A549 (cell line): ENCODE measurements at regions of chr9 and their contacts with region 1.

Region 1: GRCh38 chr9:94812343-94812742 is 85.8 kb downstream of the AOPEP start:
- DNase-seq: peak; percentile 33 to 68
- ATAC-seq: peak in 1 of 2 experiments; percentile 78; a peak in 3 of 6 replicates
- H3K4me3 ChIP-seq: no peak overlapping the region
- H3K27ac ChIP-seq: peak overlapping the region; percentile 46 to 77
- H3K4me1 ChIP-seq: peaks cover 52% of the 10 kb centered on the region
- CTCF ChIP-seq: no peak
- EP300 ChIP-seq: no peak
- POLR2A ChIP-seq: no peak
- RAD21 ChIP-seq: no peak

Region 2: DNA sequence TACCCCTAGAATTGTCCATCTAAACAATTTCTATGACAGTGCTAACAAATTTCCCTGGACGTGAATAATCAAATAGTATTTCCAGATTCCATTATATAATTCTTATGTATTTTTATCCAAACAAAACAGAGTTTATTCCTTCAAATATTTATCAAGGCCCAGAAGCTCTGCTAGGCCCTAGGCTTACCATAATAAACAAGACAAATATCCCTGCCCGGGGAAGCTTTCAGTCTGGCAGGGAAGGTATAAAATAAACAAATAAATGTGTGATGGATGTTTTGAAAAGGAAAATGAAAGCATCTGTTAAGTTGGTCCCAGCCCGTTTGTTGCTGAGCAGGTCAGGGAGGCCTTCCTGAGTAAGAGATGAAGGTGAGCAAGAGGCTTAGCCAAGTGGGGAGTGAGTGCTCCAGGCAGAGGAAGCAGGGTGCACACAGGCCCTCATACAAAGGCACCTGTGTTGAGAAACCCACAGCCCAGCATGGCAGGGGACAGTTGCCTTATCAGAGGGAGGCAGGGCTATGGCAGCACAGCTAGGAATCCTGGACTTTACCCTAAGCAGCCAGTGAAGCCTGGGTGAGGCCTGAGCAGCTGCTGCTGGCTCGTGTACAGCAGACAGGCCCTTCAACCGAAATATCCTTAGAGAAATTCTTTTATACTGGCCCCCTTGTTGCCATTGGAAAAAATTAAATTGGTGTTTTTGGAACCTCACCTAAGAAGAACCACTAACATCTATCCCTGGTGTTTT is 1578.8 kb after region 1 on chr9:
- CTCF ChIA-PET with region 1: no interaction called
- POLR2A ChIA-PET with region 1: interaction called, 16 read pairs
- DNase-seq: peak in 1 of 2 experiments; percentile 44
- ATAC-seq: peak; percentile 76 to 82
- H3K4me3 ChIP-seq: no peak overlapping the region
- H3K27ac ChIP-seq: peak overlapping the region; percentile 60 to 62
- H3K4me1 ChIP-seq: peaks cover 22% of the 10 kb centered on the region; the same call in 2 of the 3 replicates
- CTCF ChIP-seq: no peak
- EP300 ChIP-seq: no peak
- POLR2A ChIP-seq: no peak
- RAD21 ChIP-seq: no peak